HEK293T (cell line): ENCODE measurements at regions of chr1 and their contacts with region 1.

Region 1: GRCh38 chr1:147389532-147390524 is 147.3 kb downstream of the CHD1L start:
- DNase-seq: peak; percentile 70

Region 2: DNA sequence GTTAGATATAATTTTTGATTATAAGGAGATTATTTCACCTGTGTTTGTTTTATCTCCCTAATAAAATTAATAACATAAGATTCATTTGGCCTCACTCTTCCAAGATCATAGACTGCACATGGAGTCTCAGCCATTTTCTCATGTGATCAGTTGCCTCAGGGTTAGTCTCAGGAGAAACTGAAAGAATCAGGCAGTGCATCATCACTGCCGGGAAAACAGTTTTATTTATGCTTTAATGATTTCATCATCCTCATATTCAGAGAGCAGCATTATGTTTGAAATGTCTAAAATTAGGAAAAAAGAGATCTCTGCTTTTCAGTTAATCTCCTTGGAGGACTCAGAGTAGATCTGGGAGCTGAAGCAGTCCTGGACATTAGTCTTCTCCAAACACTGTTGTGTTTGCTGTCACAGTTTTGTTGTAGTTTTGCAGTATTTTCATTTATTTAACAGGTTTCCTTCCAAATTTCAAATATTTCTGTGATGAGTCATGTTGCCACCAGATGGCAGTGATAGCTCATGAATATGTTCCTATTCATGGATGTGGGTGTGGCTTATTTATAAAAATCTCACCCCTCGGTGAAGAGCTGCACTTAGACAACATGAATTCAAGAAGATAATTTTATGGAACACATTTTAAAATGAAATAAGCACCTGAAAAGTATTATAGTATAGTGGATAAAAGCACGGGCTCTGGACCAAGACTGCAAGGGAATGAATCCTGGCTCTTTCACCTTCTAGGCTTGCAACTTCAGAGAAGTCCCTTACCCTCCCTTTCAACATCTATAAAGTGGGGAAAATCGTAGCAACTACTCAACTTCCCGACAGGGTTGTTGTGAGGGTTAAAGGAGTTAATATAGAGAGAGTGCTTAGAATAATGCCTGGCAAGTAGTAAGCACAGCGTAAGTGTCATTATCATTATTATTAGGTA is 116.2 kb before region 1 on chr1:
- CTCF ChIA-PET with region 1: interaction called, 25 read pairs
- POLR2A ChIA-PET with region 1: interaction called, 3 read pairs
- DNase-seq: peak; percentile 60

Region 3: GRCh38 chr1:147377263-147378246 is 12.3 kb before region 1 on chr1:
- CTCF ChIA-PET with region 1: interaction called, 17 read pairs
- POLR2A ChIA-PET with region 1: no interaction called
- DNase-seq: no peak